ENCODE measurements at regions of chr5 and their contacts with region 1.

Region 1: DNA sequence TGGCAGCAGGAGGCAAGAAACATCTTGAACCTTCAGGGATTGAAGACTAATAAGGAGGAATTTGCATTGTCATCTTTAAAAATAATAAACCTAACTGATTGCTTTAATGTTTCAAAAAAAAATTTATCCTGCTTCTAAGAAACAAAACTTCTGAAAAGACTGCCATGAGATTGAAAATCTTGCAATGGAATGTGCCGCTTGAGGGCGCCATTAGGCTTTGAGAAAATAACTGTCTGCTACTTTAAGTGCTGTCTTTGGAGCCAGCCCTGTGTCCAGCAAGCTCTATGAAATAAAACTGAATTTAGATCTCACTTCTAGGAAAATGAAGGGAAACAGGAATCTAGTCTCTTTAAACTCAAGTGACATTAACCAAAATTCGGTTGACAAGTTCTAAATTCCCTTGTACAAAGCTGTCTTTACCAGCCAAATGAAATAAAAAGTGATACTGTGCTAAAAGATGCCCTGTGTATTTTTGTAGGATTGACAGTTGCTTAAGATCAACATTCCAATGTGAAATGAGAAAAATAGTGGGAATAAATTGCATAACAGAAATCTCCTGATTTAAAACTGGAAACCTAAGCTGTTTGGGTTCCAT is 79.4 kb downstream of the ESM1 start:
- DNase-seq: peak; percentile 75
- H3K4me3 ChIP-seq: no peak overlapping the region
- H3K27ac ChIP-seq: no peak overlapping the region
- H3K4me1 ChIP-seq: no peaks in the 10 kb centered on the region
- H3K27me3 ChIP-seq: peaks cover 9% of the 10 kb centered on the region
- CTCF ChIP-seq: peak; percentile 87

Region 2: DNA sequence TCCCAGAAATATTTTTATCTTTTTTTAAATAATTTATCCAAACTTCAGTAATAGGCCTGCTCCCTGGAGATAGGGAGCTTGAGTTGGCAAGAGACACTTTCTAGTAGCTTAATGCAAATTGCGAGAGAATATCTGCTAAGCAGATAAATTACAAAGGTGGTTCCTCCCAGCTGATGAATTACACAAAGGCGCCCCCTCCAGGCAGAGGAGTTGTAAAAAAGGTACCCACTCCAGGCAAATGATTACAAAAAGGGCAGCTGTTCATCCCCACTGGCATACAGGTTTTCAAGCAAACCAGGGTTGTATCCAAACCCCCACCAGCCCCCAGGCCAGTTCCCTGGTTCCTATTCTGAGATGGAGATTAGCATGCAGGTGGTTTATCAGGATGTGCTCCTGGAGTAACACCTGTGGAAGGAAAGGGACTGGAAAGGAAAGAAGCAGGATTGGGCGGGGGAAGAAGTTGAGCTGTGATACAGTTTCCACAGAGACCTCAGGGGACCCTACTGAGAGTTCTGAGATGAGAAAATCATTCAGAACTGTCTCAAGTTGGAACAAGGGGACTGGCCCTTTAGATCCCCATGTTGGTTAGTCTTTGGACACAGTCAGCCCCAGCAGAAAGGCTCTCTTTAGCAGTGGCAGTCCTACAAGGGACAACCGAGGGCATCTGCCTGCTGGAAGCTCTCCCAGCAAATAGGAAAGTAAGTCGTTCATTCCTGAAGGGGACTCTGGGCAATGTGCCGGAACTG is 53.8 kb after region 1 on chr5:
- CTCF ChIA-PET with region 1: interaction called, 3 read pairs
- POLR2A ChIA-PET with region 1: no interaction called
- intact Hi-C with region 1: loop called (anchors 5 kb)
- DNase-seq: peak; percentile 56
- H3K4me3 ChIP-seq: no peak overlapping the region
- H3K27ac ChIP-seq: no peak overlapping the region
- H3K4me1 ChIP-seq: no peaks in the 10 kb centered on the region
- H3K27me3 ChIP-seq: no peaks in the 10 kb centered on the region
- CTCF ChIP-seq: peak; percentile 65

Region 3: DNA sequence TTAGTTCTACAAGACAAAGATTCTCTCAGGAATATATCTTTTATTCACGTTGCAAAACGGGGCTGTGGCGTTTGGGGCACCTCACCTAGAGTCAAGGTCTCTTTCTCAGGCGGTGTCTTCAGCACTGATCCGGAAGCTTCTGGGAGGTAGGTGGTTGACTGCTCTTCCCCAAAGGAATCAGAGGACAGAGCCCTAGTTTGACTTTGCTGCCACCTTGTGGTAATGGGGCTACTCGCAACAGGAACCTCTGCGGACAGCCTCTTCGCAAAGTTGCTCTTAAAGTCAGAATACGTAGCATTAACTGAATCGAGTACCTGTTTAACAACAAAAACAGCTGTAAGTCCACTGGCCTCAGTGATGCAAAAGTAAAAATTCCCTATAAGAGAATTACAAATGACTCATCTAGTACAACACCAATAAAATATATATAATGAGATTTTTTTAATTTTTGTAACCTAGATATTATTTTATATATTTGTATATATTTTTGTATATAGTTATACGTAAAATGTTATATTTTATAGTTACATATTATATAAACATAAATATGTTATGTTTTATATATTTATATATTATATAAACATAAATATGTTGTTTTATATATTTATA is 240.6 kb after region 1 on chr5:
- CTCF ChIA-PET with region 1: interaction called, 7 read pairs
- POLR2A ChIA-PET with region 1: no interaction called
- intact Hi-C with region 1: loop called (anchors 1 kb)
- DNase-seq: peak; percentile 91
- H3K4me3 ChIP-seq: no peak overlapping the region
- H3K27ac ChIP-seq: no peak overlapping the region
- H3K4me1 ChIP-seq: no peaks in the 10 kb centered on the region
- H3K27me3 ChIP-seq: peaks cover 27% of the 10 kb centered on the region
- CTCF ChIP-seq: peak; percentile 94

Region 4: DNA sequence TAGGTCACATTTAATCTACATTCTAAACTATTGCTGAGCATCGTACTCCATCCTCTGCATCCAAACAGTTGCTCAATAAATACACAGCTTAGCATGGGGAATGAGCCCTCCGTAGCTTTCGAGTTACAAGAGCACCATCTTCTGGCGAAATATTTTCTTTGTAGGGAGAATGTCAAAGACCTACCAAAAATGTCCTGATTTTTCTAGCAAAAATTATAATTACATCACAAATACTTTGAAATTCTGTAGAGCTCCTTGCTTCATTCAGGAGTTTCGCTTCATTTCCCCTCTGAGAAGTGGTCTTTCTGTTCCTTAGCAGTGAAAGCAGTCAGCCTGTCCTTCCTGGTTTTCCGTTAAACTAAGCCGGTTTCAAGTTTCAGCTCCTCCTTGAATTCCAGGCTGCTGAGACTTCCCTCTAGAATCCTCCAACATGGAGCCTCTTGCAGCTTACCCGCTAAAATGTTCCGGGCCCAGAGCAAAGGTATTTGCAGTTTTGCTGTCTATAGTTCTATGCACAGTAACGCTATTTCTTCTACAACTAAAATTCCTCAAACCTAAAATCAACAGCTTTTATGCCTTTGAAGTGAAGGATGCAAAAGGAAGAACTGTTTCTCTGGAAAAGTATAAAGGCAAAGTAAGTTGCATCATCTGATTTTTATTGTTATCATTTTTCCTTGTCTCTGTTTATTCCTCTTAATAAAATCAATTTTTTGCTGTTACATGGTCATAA is 253.9 kb after region 1 on chr5 and contains the start of gene GPX8:
- CTCF ChIA-PET with region 1: interaction called, 27 read pairs
- POLR2A ChIA-PET with region 1: interaction called, 3 read pairs
- intact Hi-C with region 1: no loop called
- DNase-seq: peak; percentile 89
- H3K4me3 ChIP-seq: peak within 1 kb of the TSS; percentile 62
- H3K27ac ChIP-seq: peak within 1 kb of the TSS; percentile 87
- H3K4me1 ChIP-seq: peaks cover 6% of the 10 kb centered on the region
- H3K27me3 ChIP-seq: no peaks in the 10 kb centered on the region
- CTCF ChIP-seq: peak; percentile 83
- total RNA-seq, gene GPX8: 52.2 and 54.7 TPM in 2 replicates

Region 5: DNA sequence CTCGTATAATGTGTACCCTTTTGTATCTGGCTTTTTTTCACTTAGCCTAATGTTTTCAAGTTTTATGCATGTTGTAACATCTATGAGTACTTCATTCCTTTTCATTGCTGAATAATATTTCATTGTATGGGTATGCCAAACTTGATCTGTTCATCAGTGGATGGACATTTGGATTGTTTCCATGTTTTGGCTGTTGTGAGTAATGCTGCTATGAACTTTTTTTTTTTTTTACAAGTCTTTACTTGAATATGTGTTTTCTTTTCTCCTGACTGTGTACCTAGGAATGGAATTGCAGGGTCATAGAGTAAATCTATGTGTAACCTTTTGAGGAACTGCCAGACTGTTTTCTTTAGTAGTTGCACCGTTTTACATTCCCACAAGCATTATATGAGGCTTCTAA is 454.1 kb after region 1 on chr5:
- CTCF ChIA-PET with region 1: no interaction called
- POLR2A ChIA-PET with region 1: no interaction called
- intact Hi-C with region 1: no loop called
- DNase-seq: no peak
- H3K4me3 ChIP-seq: no peak overlapping the region
- H3K27ac ChIP-seq: no peak overlapping the region
- H3K4me1 ChIP-seq: no peaks in the 10 kb centered on the region
- H3K27me3 ChIP-seq: no peaks in the 10 kb centered on the region
- CTCF ChIP-seq: no peak